ENCODE measurements at regions of chr19 and their contacts with region 1.

Region 1: DNA sequence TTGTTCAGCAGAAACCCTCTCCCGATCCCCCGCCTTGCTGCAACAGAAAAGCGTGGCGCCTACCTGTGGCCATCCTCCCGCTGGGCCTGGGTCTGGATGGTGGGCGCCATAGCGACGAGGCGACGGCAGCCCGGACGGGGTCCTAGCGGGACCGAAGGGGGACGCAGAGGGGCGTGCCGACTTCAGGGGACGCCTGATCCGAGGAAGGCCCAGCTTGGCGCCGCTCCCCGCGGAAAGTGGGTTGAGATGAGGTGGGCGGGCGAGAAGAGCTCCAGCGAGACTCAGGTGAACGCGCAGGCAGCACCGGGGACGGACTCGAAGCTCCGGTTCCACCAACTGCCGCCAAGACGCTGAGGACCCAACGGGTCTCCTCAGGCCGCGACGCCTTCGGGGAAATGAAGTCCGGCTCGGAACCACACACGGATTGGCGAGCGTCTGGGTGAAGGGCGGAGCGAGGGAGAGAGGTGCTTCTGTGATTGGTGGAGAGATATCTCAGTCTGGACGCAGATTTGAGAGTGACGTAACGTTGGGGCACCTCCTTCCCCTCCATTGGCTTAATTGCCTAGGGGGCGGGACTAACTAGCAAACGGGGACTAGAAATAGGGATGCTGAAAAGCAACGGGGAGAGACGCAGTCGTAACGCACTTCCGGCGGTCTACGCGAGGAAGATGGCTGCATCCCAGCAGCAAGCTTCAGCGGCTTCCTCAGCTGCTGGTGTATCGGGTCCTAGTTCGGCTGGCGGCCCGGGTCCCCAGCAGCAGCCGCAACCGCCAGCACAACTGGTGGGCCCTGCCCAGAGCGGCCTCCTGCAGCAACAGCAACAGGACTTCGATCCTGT is at the starts of genes MED29 and PAF1:
- DNase-seq: peak; percentile 98
- H3K4me3 Mint-ChIP-seq: peak within 1 kb of the TSS; percentile 95
- H3K27ac Mint-ChIP-seq: peak within 1 kb of the TSS; percentile 99
- H3K4me1 Mint-ChIP-seq: peaks cover 40% of the 10 kb centered on the region
- H3K27me3 Mint-ChIP-seq: no peaks in the 10 kb centered on the region
- total RNA-seq, gene MED29: 22.2 to 26.9 TPM
- total RNA-seq, gene PAF1: 41.6 to 43.8 TPM

Region 2: GRCh38 chr19:39341719-39342604 is 49.0 kb before region 1 on chr19 and contains the start of gene SAMD4B:
- CTCF ChIA-PET with region 1: interaction called, 6 read pairs
- POLR2A ChIA-PET with region 1: interaction called, 7 read pairs
- intact Hi-C with region 1: loop called (anchors 2 kb)
- DNase-seq: peak; percentile 100
- H3K4me3 Mint-ChIP-seq: peak within 1 kb of the TSS; percentile 98
- H3K27ac Mint-ChIP-seq: peak within 1 kb of the TSS; percentile 91
- H3K4me1 Mint-ChIP-seq: peaks cover 65% of the 10 kb centered on the region
- H3K27me3 Mint-ChIP-seq: no peaks in the 10 kb centered on the region
- total RNA-seq, gene SAMD4B: 49.4 to 51.3 TPM

Region 3: GRCh38 chr19:39351537-39352064 is 39.4 kb before region 1 on chr19:
- CTCF ChIA-PET with region 1: interaction called, 7 read pairs
- POLR2A ChIA-PET with region 1: interaction called, 4 read pairs
- intact Hi-C with region 1: loop called (anchors 1 kb)
- DNase-seq: peak; percentile 75
- H3K4me3 Mint-ChIP-seq: no peak overlapping the region
- H3K27ac Mint-ChIP-seq: peak overlapping the region; percentile 84
- H3K4me1 Mint-ChIP-seq: peaks cover 42% of the 10 kb centered on the region
- H3K27me3 Mint-ChIP-seq: no peaks in the 10 kb centered on the region

Region 4: DNA sequence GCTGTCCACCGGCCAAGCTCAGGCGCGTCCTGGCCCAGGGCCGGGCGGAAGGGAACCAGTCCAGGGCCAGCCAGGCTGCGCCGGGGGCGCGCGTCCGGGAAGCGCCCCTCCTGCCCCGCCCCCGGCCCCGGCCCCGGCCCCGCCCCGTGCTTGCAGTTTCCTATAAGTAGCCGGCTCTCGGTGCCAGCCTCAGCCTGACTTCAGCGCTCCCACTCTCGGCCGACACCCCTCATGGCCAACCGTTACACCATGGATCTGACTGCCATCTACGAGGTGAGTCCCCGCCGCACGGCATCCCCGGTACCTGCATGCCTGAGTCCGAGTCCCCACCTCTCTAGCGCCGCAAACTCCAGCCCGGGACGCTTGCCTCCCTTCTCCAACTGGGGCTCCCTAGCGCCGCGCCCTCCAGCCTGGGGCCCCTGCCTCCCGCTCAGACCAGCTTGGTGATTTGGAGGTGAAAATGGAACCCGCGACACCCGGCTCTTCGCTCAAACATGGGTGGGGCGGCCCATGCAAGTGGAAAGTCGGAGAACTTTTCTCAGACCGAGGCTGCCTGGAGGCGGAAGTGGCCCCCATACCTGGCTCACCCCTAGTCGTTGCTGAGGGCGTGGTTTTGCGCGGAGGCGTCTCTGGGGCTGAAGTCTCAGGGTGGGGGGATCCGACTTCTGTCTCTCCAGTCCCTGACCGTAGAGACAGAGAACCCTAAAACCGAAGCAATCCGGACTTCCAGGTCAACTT is 15.9 kb after region 1 on chr19 and contains the start of gene ZFP36:
- CTCF ChIA-PET with region 1: interaction called, 219 read pairs
- POLR2A ChIA-PET with region 1: interaction called, 32 read pairs
- intact Hi-C with region 1: loop called (anchors 1 kb)
- DNase-seq: peak; percentile 93
- H3K4me3 Mint-ChIP-seq: peak within 1 kb of the TSS; percentile 85
- H3K27ac Mint-ChIP-seq: peak within 1 kb of the TSS; percentile 96
- H3K4me1 Mint-ChIP-seq: peaks cover 44% of the 10 kb centered on the region
- H3K27me3 Mint-ChIP-seq: no peaks in the 10 kb centered on the region
- total RNA-seq, gene ZFP36: 104 to 118 TPM